Breast epithelium (tissue), 4 donors: ENCODE measurements at regions of chr13 and their contacts with region 1.

Region 1: GRCh38 chr13:102773441-102774215 is at the start of gene TEX30:
- DNase-seq: peak; percentile 59 to 71
- H3K4me3 ChIP-seq: peak within 1 kb of the TSS; percentile 65 to 76 (median 74)
- H3K27ac ChIP-seq: peak within 1 kb of the TSS; percentile 87 to 93
- H3K4me1 ChIP-seq: no peaks in the 10 kb centered on the region
- H3K27me3 ChIP-seq: no peaks in the 10 kb centered on the region
- CTCF ChIP-seq: peak in 1 of 3 donors; percentile 11
- POLR2A ChIP-seq: peak; percentile 51
- total RNA-seq, gene TEX30: 8.3 to 11.8 (median 9.3) TPM

Region 2: GRCh38 chr13:101706651-101707050 is 1067.0 kb before region 1 on chr13:
- intact Hi-C with region 1: no loop called
- DNase-seq: peak in 1 of 2 donors; percentile 30
- H3K4me3 ChIP-seq: no peak overlapping the region
- H3K27ac ChIP-seq: no peak overlapping the region
- H3K4me1 ChIP-seq: no peaks in the 10 kb centered on the region
- H3K27me3 ChIP-seq: no peaks in the 10 kb centered on the region
- CTCF ChIP-seq: no peak
- POLR2A ChIP-seq: no peak

Region 3: GRCh38 chr13:102798581-102799425 is 25.2 kb after region 1 on chr13 and contains the starts of genes BIVM and POGLUT2:
- intact Hi-C with region 1: loop called (anchors 1 kb)
- DNase-seq: peak; percentile 90 to 92
- H3K4me3 ChIP-seq: peak within 1 kb of the TSS; percentile 76 to 84 (median 79)
- H3K27ac ChIP-seq: peak within 1 kb of the TSS; percentile 74 to 78
- H3K4me1 ChIP-seq: peaks cover 0 to 7% of the 10 kb centered on the region in 2 donors
- H3K27me3 ChIP-seq: no peaks in the 10 kb centered on the region
- CTCF ChIP-seq: no peak
- POLR2A ChIP-seq: no peak
- total RNA-seq, gene BIVM: 15.2 to 29.6 (median 27.2) TPM
- total RNA-seq, gene POGLUT2: 3.2 to 5.9 (median 5.9) TPM